HCT116 (cell line): ENCODE measurements at regions of chr7 and their contacts with region 1.

Region 1: GRCh38 chr7:35707422-35707821 is 12.5 kb upstream of the HERPUD2 start:
- DNase-seq: no peak
- ATAC-seq: no peak
- H3K4me3 ChIP-seq: no peak overlapping the region
- H3K27ac ChIP-seq: no peak overlapping the region
- H3K4me1 ChIP-seq: peaks cover 5 to 17% of the 10 kb centered on the region in 2 experiments; a peak in 3 of 4 replicates
- H3K27me3 ChIP-seq: no peaks in the 10 kb centered on the region
- CTCF ChIP-seq: no peak
- POLR2A ChIP-seq: no peak
- RAD21 ChIP-seq: no peak

Region 2: GRCh38 chr7:35477609-35478008 is 229.8 kb before region 1 on chr7:
- CTCF ChIA-PET with region 1: no interaction called
- POLR2A ChIA-PET with region 1: no interaction called
- RAD21 ChIA-PET with region 1: no interaction called
- intact Hi-C with region 1: no loop called
- DNase-seq: no peak
- ATAC-seq: no peak
- H3K4me3 ChIP-seq: no peak overlapping the region
- H3K27ac ChIP-seq: no peak overlapping the region
- H3K4me1 ChIP-seq: no peaks in the 10 kb centered on the region
- H3K27me3 ChIP-seq: no peaks in the 10 kb centered on the region
- CTCF ChIP-seq: no peak
- POLR2A ChIP-seq: no peak
- RAD21 ChIP-seq: no peak

Region 3: DNA sequence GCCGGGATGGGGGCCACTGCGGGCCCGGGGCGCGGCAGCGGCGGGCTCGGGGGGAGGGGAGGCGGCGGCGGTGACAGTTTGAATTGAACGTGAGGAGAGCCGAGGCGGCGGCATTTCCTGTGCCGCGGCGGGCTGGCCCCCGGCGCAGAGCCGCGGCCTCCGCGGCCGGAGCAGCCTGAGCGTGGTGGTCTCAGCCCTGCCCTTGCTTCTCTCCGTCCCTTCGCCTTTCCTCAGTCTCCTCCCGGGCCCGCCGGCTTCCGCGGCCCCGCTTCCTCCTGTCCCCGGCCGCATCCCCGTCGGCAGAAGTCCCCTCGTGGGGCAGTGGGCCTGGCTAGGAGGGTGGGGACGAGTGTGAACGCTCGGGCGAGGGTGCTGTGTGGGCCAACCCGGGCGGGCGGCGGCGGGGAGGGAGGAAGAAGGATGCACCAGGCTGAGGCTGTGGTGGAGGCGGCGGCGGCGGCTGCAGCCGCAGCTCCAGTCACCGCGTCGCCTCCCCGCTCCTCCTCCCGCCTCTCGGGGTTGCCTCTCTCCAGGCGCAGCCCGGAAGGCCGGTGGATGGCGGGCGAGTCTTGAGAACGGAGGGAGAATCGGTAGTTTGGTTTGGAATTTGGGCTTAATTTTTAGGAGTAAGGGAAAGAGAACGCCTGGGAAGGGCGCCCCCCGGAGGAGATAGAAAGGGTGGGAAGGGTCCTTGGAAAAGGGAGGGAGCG is 94.1 kb after region 1 on chr7:
- CTCF ChIA-PET with region 1: interaction called, 3 read pairs
- POLR2A ChIA-PET with region 1: interaction called, 4 read pairs
- RAD21 ChIA-PET with region 1: no interaction called
- intact Hi-C with region 1: loop called (anchors 1 kb)
- DNase-seq: no peak
- ATAC-seq: peak; percentile 47
- H3K4me3 ChIP-seq: peak overlapping the region; percentile 72 to 78
- H3K27ac ChIP-seq: peak overlapping the region; percentile 95
- H3K4me1 ChIP-seq: peaks cover 8 to 20% of the 10 kb centered on the region in 2 experiments; a peak in 3 of 4 replicates
- H3K27me3 ChIP-seq: no peaks in the 10 kb centered on the region
- CTCF ChIP-seq: peak; percentile 52 to 70 (median 62); a peak in 5 of 6 replicates
- POLR2A ChIP-seq: no peak
- RAD21 ChIP-seq: peak; percentile 43; the same call in 1 of the 2 replicates

Region 4: GRCh38 chr7:35975851-35976454 is 268.5 kb after region 1 on chr7:
- CTCF ChIA-PET with region 1: interaction called, 7 read pairs
- POLR2A ChIA-PET with region 1: no interaction called
- RAD21 ChIA-PET with region 1: no interaction called
- intact Hi-C with region 1: loop called (anchors 5 kb)
- DNase-seq: peak; percentile 79
- ATAC-seq: peak; percentile 93
- H3K4me3 ChIP-seq: no peak overlapping the region
- H3K27ac ChIP-seq: no peak overlapping the region
- H3K4me1 ChIP-seq: no peaks in the 10 kb centered on the region
- H3K27me3 ChIP-seq: no peaks in the 10 kb centered on the region
- CTCF ChIP-seq: peak; percentile 75 to 89 (median 83)
- POLR2A ChIP-seq: no peak
- RAD21 ChIP-seq: peak; percentile 94

Region 5: DNA sequence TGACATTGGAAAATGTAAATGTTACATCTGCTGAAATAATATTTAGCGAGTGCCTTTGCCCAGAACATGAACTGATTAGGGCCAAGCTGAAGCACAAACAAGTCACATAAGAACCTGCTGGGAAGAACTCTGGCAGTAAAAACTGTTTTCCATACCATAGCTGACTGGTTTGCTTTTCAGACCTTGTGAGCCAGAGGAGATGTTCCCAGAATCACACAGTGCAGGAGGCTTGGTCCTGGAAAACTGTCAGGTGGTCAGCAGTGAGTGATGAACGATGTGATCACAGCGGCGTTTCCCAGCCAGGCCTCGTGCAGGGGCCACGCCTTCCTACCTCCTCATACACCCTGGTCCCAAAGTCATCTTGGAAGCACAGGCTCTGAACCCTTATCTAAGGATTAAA is 281.4 kb after region 1 on chr7:
- CTCF ChIA-PET with region 1: no interaction called
- POLR2A ChIA-PET with region 1: no interaction called
- RAD21 ChIA-PET with region 1: no interaction called
- intact Hi-C with region 1: no loop called
- DNase-seq: no peak
- ATAC-seq: no peak
- H3K4me3 ChIP-seq: no peak overlapping the region
- H3K27ac ChIP-seq: no peak overlapping the region
- H3K4me1 ChIP-seq: no peaks in the 10 kb centered on the region
- H3K27me3 ChIP-seq: no peaks in the 10 kb centered on the region
- CTCF ChIP-seq: no peak
- POLR2A ChIP-seq: no peak
- RAD21 ChIP-seq: no peak

Region 6: GRCh38 chr7:36021367-36021766 is 313.9 kb after region 1 on chr7:
- CTCF ChIA-PET with region 1: no interaction called
- POLR2A ChIA-PET with region 1: no interaction called
- RAD21 ChIA-PET with region 1: no interaction called
- intact Hi-C with region 1: no loop called
- DNase-seq: peak; percentile 10
- ATAC-seq: peak; percentile 72
- H3K4me3 ChIP-seq: no peak overlapping the region
- H3K27ac ChIP-seq: no peak overlapping the region
- H3K4me1 ChIP-seq: no peaks in the 10 kb centered on the region
- H3K27me3 ChIP-seq: no peaks in the 10 kb centered on the region
- CTCF ChIP-seq: peak; percentile 53 to 75 (median 69); a peak in 5 of 6 replicates
- POLR2A ChIP-seq: no peak
- RAD21 ChIP-seq: peak; percentile 79